ENCODE measurements at regions of chr12 and their contacts with region 1.

Region 1: GRCh38 chr12:122860346-122861090 is 25.3 kb downstream of the HIP1R start:
- DNase-seq: peak; percentile 78 to 83
- H3K4me3 ChIP-seq: no peak overlapping the region
- H3K4me3 Mint-ChIP-seq: no peak overlapping the region
- H3K27ac Mint-ChIP-seq: no peak overlapping the region
- H3K4me1 ChIP-seq: peaks cover 8% of the 10 kb centered on the region; the same call in 1 of the 2 replicates
- H3K4me1 Mint-ChIP-seq: no peaks in the 10 kb centered on the region
- H3K27me3 ChIP-seq: no peaks in the 10 kb centered on the region
- H3K27me3 Mint-ChIP-seq: no peaks in the 10 kb centered on the region
- CTCF ChIP-seq: peak; percentile 85 to 93

Region 2: DNA sequence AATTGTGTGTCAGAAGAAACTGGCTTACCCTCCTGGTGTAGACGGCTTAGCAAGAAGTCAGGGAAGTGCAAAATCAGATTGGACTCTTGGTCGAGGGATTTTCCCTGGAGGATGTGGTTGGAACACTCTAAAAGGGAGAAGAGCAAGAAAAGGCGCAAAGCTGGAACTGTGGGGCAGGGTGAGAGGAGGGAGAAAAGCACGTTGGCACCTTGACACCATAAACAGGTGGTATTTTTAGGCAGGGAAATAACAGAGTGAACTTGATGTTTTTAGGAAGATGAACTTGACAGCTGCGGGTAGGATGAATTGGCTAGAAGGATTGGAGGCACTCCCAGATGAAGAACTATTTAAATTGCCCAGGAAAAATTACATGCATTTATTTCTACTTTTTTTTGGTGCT is 225.0 kb before region 1 on chr12:
- CTCF ChIA-PET with region 1: no interaction called
- POLR2A ChIA-PET with region 1: no interaction called
- intact Hi-C with region 1: loop called (anchors 10 kb)
- DNase-seq: no peak
- H3K4me3 ChIP-seq: no peak overlapping the region
- H3K4me3 Mint-ChIP-seq: no peak overlapping the region
- H3K27ac Mint-ChIP-seq: no peak overlapping the region
- H3K4me1 ChIP-seq: no peaks in the 10 kb centered on the region
- H3K4me1 Mint-ChIP-seq: no peaks in the 10 kb centered on the region
- H3K27me3 ChIP-seq: no peaks in the 10 kb centered on the region
- H3K27me3 Mint-ChIP-seq: no peaks in the 10 kb centered on the region
- CTCF ChIP-seq: no peak